ENCODE measurements at regions of chr7 and their contacts with region 1.

Region 1: GRCh38 chr7:73329861-73330581 is 2.1 kb downstream of the FKBP6 start:
- DNase-seq: no peak
- H3K4me3 Mint-ChIP-seq: no peak overlapping the region
- H3K27ac Mint-ChIP-seq: no peak overlapping the region
- H3K4me1 Mint-ChIP-seq: peaks cover 3% of the 10 kb centered on the region
- H3K27me3 Mint-ChIP-seq: peaks cover 2% of the 10 kb centered on the region

Region 2: GRCh38 chr7:73314271-73314670 is 15.8 kb before region 1 on chr7:
- CTCF ChIA-PET with region 1: interaction called, 11 read pairs
- POLR2A ChIA-PET with region 1: no interaction called
- DNase-seq: no peak
- H3K4me3 Mint-ChIP-seq: no peak overlapping the region
- H3K27ac Mint-ChIP-seq: no peak overlapping the region
- H3K4me1 Mint-ChIP-seq: peaks cover 3% of the 10 kb centered on the region
- H3K27me3 Mint-ChIP-seq: no peaks in the 10 kb centered on the region

Region 3: GRCh38 chr7:73423519-73424488 is 93.8 kb after region 1 on chr7:
- CTCF ChIA-PET with region 1: no interaction called
- POLR2A ChIA-PET with region 1: no interaction called
- DNase-seq: no peak
- H3K4me3 Mint-ChIP-seq: no peak overlapping the region
- H3K27ac Mint-ChIP-seq: no peak overlapping the region
- H3K4me1 Mint-ChIP-seq: peaks cover 6% of the 10 kb centered on the region
- H3K27me3 Mint-ChIP-seq: peaks cover 3% of the 10 kb centered on the region

Region 4: GRCh38 chr7:73515178-73515577 is 185.2 kb after region 1 on chr7:
- CTCF ChIA-PET with region 1: no interaction called
- POLR2A ChIA-PET with region 1: interaction called, 11 read pairs
- DNase-seq: no peak
- H3K4me3 Mint-ChIP-seq: no peak overlapping the region
- H3K27ac Mint-ChIP-seq: no peak overlapping the region
- H3K4me1 Mint-ChIP-seq: peaks cover 49% of the 10 kb centered on the region
- H3K27me3 Mint-ChIP-seq: no peaks in the 10 kb centered on the region